Heart right ventricle (tissue), 16 donors: ENCODE measurements at regions of chr18 and their contacts with region 1.

Region 1: DNA sequence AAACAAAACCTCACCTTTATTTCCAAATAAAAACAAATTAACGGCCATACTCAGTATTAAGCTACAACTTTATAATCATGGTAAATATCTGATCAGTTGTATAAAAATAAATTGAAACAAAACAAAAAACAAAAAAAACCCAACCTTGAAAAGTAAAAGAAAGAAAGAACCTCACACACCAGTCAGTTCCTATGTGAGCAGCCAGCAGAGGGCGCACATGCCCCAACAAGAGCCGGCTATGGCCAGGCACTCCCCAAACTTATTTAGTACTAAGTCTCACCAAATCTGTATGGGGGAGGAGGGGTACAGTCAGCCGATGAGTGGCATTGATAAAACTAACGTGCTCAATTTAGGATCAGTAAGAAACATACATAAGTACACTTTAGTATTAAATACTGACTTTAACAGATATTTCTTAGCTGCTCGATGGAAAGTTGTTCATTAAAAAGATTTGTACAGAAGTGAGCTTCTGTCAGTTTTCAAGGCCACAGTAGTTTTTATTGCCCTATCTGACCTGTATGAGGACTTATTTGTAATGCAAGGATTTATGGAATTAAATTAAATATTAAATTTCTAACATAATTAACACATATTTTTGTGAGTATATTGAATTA is 172.6 kb downstream of the TCF4 start:
- DNase-seq: peak; percentile 88 to 91
- ATAC-seq: peak; percentile 87 to 93 (median 90)
- H3K4me3 ChIP-seq: no peak overlapping the region
- H3K27ac ChIP-seq: peak overlapping the region in 5 of 10 donors; percentile 14 to 91 (median 54)
- H3K4me1 ChIP-seq: peaks cover 0 to 78% (median 56%) of the 10 kb centered on the region in 9 donors
- H3K27me3 ChIP-seq: no peaks in the 10 kb centered on the region
- CTCF ChIP-seq: peak; percentile 82 to 98 (median 92)

Region 2: DNA sequence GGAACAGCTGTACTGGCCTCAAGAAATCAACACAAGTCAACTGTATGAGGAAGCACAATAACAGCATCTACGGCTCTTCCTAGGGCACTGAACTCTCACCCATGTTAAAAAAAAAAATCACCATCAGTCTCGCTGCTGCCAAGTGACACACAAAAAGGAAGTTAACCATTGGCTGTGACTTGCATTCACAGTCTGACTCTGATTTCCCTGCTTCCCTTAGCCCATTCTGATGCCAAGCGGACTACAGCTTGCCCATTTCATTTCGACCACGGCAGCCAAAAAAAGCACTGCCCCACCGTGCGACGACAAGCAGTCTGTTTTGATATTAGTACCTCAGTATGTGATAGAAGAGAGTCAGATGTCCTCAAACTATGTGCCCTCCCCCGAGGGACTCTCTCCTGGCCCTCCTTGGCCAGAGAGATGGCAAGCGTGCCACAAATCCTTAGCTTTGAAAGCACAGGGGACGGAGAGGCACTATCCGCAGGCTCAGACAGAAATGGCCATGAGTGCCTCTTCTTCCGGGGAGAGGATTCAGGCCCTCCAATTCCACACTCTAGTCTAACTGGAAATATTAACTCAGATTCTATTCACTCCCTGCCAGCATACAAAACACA is 77.3 kb before region 1 on chr18:
- intact Hi-C with region 1: no loop called
- DNase-seq: peak; percentile 34 to 53
- ATAC-seq: peak; percentile 70 to 88 (median 80)
- H3K4me3 ChIP-seq: peak overlapping the region in 7 of 10 donors; percentile 9 to 39 (median 14)
- H3K27ac ChIP-seq: peak overlapping the region; percentile 18 to 91 (median 80)
- H3K4me1 ChIP-seq: peaks cover 2 to 76% (median 56%) of the 10 kb centered on the region in 9 donors
- H3K27me3 ChIP-seq: no peaks in the 10 kb centered on the region
- CTCF ChIP-seq: no peak

Region 3: DNA sequence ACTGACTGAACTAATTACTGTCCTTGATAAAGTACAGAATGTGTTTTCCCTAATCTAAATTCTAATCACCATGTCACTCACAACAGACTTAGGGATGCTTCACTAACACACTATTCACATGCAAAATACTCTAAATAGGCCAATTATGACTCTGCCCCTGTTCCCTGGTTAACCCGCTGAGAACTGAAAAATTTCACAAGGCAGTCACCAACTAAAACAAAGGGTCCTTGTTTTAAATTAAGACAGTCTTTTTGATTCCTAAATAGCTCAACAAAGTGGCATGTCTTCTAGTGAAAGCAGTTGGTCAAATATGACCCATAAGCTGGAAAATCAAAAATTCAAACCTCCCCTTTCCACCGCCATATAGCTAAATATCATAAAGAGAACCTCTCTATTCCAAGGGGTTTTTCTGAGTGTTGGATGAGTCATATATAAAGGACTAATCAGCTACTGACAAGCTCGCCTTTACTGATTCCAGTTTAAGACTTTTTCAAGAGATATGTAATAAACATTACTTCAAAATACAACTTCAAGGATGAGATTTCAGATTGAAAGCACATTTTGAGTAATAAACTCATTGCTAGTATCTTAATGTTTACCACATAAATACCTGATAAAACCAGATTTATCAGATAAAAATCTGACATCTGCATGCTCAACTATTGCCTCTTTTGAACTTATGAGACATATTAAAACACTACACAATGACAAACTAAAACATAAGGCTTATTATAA is 63.2 kb before region 1 on chr18:
- intact Hi-C with region 1: loop called in 1 of 10 experiments (anchors 5 kb)
- DNase-seq: no peak
- ATAC-seq: no peak
- H3K4me3 ChIP-seq: no peak overlapping the region
- H3K27ac ChIP-seq: peak overlapping the region in 2 of 10 donors; percentile 42 to 54
- H3K4me1 ChIP-seq: peaks cover 0 to 53% (median 7%) of the 10 kb centered on the region in 9 donors
- H3K27me3 ChIP-seq: no peaks in the 10 kb centered on the region
- CTCF ChIP-seq: no peak

Region 4: DNA sequence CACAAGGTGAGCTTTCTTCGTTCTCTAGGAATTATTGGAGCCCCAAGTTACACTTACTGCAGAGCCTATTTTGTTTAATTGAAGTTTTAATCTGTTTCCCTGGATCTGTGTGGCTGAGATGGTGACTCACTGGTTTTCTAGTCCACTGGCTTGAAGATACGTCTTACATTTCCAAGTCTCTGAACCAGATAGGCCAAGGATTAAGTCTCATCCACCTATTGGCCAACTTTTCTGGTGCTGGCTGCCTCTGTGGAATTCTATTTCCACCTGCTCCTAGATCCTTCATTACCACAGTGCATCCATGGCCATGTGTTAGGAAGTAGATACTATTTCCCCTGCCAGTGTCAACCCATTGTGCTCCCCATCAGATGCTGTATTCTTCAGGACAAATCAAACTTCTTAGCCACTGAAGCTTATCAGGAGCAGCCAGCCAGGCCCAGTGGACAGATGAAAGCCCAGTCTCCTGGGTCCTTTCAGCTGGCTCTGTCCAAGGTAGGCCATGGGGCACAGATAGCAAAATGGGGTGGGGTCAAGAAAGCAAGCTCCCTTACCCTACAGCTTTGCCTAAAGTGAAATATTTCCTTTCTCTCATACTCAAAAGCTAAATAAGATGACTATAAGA is 371.4 kb after region 1 on chr18:
- intact Hi-C with region 1: loop called in 7 of 10 experiments (anchors 2 to 10 kb)
- DNase-seq: no peak
- ATAC-seq: no peak
- H3K4me3 ChIP-seq: no peak overlapping the region
- H3K27ac ChIP-seq: no peak overlapping the region
- H3K4me1 ChIP-seq: peaks cover 0 to 6% (median 3%) of the 10 kb centered on the region in 9 donors
- H3K27me3 ChIP-seq: no peaks in the 10 kb centered on the region
- CTCF ChIP-seq: no peak

Region 5: GRCh38 chr18:55856229-55856628 is 440.9 kb after region 1 on chr18:
- intact Hi-C with region 1: loop called in 5 of 10 experiments (anchors 5 to 10 kb)
- DNase-seq: no peak
- ATAC-seq: no peak
- H3K4me3 ChIP-seq: no peak overlapping the region
- H3K27ac ChIP-seq: no peak overlapping the region
- H3K4me1 ChIP-seq: peaks cover 0 to 6% (median 0%) of the 10 kb centered on the region in 9 donors
- H3K27me3 ChIP-seq: no peaks in the 10 kb centered on the region
- CTCF ChIP-seq: no peak

Region 6: DNA sequence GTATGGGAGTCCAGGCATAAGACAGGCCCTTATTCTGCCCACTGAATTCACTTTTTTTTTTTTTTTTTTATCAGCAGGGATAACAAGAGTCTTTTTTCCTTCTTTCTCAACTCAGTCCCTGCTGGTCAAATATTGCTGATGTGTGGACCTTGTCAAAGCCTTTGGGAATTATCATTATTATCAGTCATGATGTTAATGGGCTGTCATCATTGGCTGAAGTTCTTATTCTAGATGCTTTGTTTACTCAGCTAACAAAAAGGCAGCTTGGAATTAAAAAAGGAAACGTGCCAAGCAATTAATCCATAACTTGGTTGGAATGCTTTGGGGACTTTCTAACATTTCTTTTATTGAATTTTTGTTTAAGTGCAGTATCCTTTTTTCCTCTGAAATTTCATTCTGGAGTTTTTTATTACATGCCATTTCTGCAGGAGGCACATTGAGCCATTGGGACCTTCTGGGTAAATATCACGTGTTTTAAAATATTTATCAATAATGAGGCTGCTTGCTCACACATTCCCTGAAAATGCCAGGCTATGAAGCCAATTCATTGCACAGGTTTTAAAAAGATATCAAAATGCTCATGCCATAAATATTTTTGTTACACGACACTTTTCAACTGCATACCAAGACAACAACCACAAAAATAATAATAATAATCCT is 976.7 kb after region 1 on chr18:
- intact Hi-C with region 1: loop called in 2 of 10 experiments (anchors 10 kb)
- DNase-seq: no peak
- ATAC-seq: no peak
- H3K4me3 ChIP-seq: no peak overlapping the region
- H3K27ac ChIP-seq: no peak overlapping the region
- H3K4me1 ChIP-seq: no peaks in the 10 kb centered on the region
- H3K27me3 ChIP-seq: no peaks in the 10 kb centered on the region
- CTCF ChIP-seq: no peak